Aorta (tissue), 5 donors: ENCODE measurements at regions of chr3 and their contacts with region 1.

Region 1: DNA sequence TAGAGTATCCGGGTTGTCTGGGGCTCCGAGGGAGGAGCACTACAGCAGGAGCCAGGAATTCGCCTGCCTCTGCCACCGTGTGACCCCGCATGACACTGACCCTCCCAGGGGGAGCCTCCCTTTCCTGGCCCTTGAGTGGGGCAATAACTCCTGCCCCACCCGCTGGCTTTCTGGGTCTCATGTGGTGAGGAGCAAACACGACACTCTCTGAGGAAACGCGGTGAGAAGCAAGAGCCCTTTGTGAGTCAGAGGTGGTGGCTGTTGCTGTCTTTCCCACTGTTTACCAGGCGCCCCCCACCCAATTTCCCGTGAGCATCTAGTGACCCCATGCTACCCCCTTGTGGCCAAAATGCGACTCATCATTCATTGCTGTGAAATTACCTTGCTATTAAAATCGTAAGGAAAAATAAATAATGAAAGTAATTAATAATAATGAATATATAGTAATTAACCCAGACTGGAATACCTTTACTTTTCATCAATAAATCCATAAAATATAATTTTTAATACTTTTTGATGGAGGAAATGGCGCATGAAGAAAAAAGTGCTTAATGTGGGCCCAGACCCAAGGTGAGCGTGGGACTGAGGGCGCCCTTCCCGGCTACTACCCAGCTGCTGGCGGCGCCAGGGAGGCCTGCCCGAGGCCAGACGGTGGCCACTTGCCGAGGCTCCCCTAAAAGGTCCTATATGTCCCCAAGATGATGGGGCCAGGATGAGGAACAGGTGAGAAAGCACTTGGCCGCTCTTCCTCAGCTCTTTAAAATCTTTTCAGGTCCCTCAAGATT is 29.3 kb downstream of the CCNL1 start:
- DNase-seq: peak; percentile 49 to 76
- ATAC-seq: no peak
- H3K4me3 ChIP-seq: no peak overlapping the region
- H3K27ac ChIP-seq: no peak overlapping the region
- H3K4me1 ChIP-seq: peaks cover 0 to 3% of the 10 kb centered on the region in 2 donors
- H3K27me3 ChIP-seq: no peaks in the 10 kb centered on the region

Region 2: GRCh38 chr3:155995525-155996351 is 1134.9 kb before region 1 on chr3:
- intact Hi-C with region 1: loop called in 1 of 2 experiments (anchors 10 kb)
- DNase-seq: no peak
- ATAC-seq: no peak
- H3K4me3 ChIP-seq: no peak overlapping the region
- H3K27ac ChIP-seq: no peak overlapping the region
- H3K4me1 ChIP-seq: no peaks in the 10 kb centered on the region
- H3K27me3 ChIP-seq: no peaks in the 10 kb centered on the region

Region 3: GRCh38 chr3:156547637-156548036 is 583.0 kb before region 1 on chr3:
- intact Hi-C with region 1: loop called in 1 of 2 experiments (anchors 10 kb)
- DNase-seq: no peak
- ATAC-seq: no peak
- H3K4me3 ChIP-seq: no peak overlapping the region
- H3K27ac ChIP-seq: no peak overlapping the region
- H3K4me1 ChIP-seq: peaks cover 4 to 8% of the 10 kb centered on the region in 2 donors
- H3K27me3 ChIP-seq: no peaks in the 10 kb centered on the region

Region 4: GRCh38 chr3:157064402-157064801 is 66.3 kb before region 1 on chr3:
- intact Hi-C with region 1: no loop called
- DNase-seq: peak in 1 of 2 donors; percentile 73
- ATAC-seq: no peak
- H3K4me3 ChIP-seq: no peak overlapping the region
- H3K27ac ChIP-seq: no peak overlapping the region
- H3K4me1 ChIP-seq: no peaks in the 10 kb centered on the region
- H3K27me3 ChIP-seq: no peaks in the 10 kb centered on the region

Region 5: DNA sequence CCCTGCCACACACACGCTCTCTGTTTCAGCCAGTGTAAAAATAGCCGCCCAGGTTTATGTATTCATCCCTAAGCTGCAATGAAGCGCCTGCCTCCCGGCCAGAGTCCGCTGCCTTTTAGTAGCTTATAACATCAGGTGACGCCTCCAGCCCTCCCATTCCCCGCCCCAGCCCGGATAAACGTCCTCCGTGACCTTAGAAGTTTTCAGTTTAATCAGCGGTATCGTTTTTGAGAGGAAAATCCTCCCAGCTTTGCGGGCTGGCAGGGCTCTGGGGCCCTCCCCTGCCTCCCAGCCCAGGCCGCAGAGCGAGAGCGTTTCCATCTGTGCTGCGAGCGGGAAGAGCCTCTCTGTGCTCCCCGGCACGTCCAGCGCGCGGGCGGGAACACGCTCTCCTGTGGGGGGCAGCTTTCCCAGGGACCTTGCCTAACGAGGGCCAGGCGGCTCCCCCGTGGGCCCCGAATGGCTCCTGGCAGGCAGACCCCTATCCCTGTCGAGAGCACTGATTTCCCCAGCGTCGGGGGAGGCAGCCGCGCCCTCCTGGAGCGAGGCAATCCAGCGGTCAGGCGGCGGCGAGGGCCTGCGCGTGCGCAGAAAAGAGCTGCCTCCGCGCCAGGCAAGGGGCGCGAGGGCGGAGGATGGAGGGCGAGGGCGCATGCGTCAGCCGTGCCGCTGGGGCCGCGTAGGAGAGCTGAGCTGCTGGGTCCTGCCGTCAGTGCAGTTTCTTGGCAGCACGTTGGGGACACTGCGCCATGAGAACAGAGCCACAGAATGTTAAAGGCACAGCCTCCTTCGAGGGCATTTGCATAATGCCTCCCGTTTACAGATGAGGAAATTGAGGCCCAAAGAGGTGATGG is 41.8 kb before region 1 on chr3:
- intact Hi-C with region 1: loop called (anchors 5 kb)
- DNase-seq: peak; percentile 98
- ATAC-seq: peak; percentile 96
- H3K4me3 ChIP-seq: peak overlapping the region; percentile 1 to 31
- H3K27ac ChIP-seq: peak overlapping the region; percentile 72 to 94
- H3K4me1 ChIP-seq: peaks cover 5 to 11% of the 10 kb centered on the region in 2 donors
- H3K27me3 ChIP-seq: no peaks in the 10 kb centered on the region